ENCODE measurements at regions of chr6 and their contacts with region 1.

Region 1: GRCh38 chr6:16332175-16332542 is 93.8 kb downstream of the GMPR start:
- DNase-seq: peak; percentile 64 to 75
- ATAC-seq: peak; percentile 63 to 65
- H3K4me3 ChIP-seq: no peak overlapping the region
- H3K27ac ChIP-seq: peak overlapping the region; percentile 69 to 76 (median 72)
- H3K4me1 ChIP-seq: peaks cover 57 to 67% of the 10 kb centered on the region in 2 donors
- H3K27me3 ChIP-seq: no peaks in the 10 kb centered on the region
- CTCF ChIP-seq: peak; percentile 90 to 95 (median 92)
- POLR2A ChIP-seq: no peak

Region 2: DNA sequence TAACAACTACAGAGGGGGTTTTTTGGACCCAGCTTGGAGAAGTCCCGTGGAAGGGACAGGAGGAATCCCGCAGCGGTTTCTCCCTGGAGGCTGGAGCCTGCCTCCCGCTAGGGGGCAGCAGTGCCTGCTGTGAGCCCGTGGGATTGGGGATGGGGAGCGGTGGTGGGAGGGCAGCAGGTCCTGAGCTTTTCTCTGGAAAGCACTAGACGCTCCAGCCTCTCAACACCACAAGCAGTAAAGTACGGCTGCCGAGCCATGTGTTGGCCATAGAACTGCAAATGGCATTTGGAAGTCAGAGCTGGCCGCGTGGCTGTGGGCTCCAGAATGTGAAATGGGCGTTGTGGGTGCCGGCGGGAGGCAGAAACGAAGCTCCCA is 46.0 kb before region 1 on chr6:
- in situ Hi-C with region 1: no loop called
- intact Hi-C with region 1: loop called (anchors 5 kb)
- DNase-seq: peak in 1 of 2 donors; percentile 45
- ATAC-seq: peak; percentile 7 to 10
- H3K4me3 ChIP-seq: no peak overlapping the region
- H3K27ac ChIP-seq: peak overlapping the region; percentile 91 to 99 (median 98)
- H3K4me1 ChIP-seq: peaks cover 23 to 26% of the 10 kb centered on the region in 2 donors
- H3K27me3 ChIP-seq: no peaks in the 10 kb centered on the region
- CTCF ChIP-seq: peak; percentile 30 to 78 (median 72)
- POLR2A ChIP-seq: no peak

Region 3: GRCh38 chr6:16409531-16410441 is 77.6 kb after region 1 on chr6:
- in situ Hi-C with region 1: loop called in 2 of 4 experiments (anchors 5 to 10 kb)
- intact Hi-C with region 1: loop called (anchors 1 kb)
- DNase-seq: peak; percentile 37 to 53
- ATAC-seq: peak; percentile 78 to 88
- H3K4me3 ChIP-seq: no peak overlapping the region
- H3K27ac ChIP-seq: no peak overlapping the region
- H3K4me1 ChIP-seq: peaks cover 5 to 12% of the 10 kb centered on the region in 2 donors
- H3K27me3 ChIP-seq: no peaks in the 10 kb centered on the region
- CTCF ChIP-seq: peak; percentile 71 to 82 (median 77)
- POLR2A ChIP-seq: no peak

Region 4: GRCh38 chr6:16670183-16670582 is 338.0 kb after region 1 on chr6:
- in situ Hi-C with region 1: no loop called
- intact Hi-C with region 1: loop called (anchors 10 kb)
- DNase-seq: peak in 1 of 2 donors; percentile 18
- ATAC-seq: peak in 1 of 2 donors; percentile 22
- H3K4me3 ChIP-seq: no peak overlapping the region
- H3K27ac ChIP-seq: no peak overlapping the region
- H3K4me1 ChIP-seq: peaks cover 36 to 45% of the 10 kb centered on the region in 2 donors
- H3K27me3 ChIP-seq: no peaks in the 10 kb centered on the region
- CTCF ChIP-seq: no peak
- POLR2A ChIP-seq: no peak

Region 5: GRCh38 chr6:16964553-16965501 is 632.7 kb after region 1 on chr6:
- in situ Hi-C with region 1: loop called in 2 of 4 experiments (anchors 25 kb)
- intact Hi-C with region 1: loop called (anchors 10 kb)
- DNase-seq: peak; percentile 60 to 71
- ATAC-seq: peak; percentile 91 to 95
- H3K4me3 ChIP-seq: no peak overlapping the region
- H3K27ac ChIP-seq: no peak overlapping the region
- H3K4me1 ChIP-seq: peaks cover 4 to 9% of the 10 kb centered on the region in 2 donors
- H3K27me3 ChIP-seq: no peaks in the 10 kb centered on the region
- CTCF ChIP-seq: peak; percentile 83 to 91 (median 90)
- POLR2A ChIP-seq: no peak